Activated CD4-positive, alpha-beta T cell treated with anti-CD3 and anti-CD28 coated beads for 36 hours (primary cell): ENCODE measurements at regions of chr19 and their contacts with region 1.

Region 1: DNA sequence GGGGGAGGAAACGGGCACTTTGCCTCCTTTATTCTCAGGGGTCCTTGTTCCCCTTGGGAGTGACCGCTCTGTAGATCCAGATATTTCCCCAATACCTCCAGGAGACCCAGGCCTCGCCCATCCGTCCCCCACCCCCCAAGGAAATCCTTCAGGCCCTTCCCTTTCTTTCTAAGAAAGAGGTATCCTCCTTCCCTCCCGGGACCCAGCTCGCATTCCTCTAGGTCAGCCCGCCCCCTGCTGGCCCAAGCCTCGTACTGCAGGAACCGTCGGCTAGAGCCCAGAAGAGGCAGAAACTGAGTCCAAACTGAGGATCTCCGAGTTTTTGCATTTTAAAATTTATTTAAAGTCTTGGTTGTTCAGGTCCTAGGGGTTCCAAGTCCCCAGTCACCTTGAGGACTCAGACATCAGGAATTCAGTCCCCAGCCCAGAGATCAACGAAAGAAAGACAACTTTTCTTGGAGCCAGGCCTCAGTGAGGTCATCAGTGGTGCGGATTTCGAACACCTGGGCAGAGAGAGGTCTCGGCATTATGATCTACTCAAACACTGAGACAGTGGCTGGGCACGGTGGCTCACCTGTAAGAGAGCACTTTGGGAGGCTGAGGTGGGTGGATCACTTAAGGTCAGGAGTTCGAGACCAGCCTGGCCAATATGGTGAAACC is 7.5 kb upstream of the LRFN1 start:
- DNase-seq: peak; percentile 90
- ATAC-seq: peak; percentile 39
- H3K4me3 Mint-ChIP-seq: no peak overlapping the region
- H3K27ac Mint-ChIP-seq: peak overlapping the region; percentile 51
- H3K4me1 Mint-ChIP-seq: peaks cover 40% of the 10 kb centered on the region
- H3K27me3 Mint-ChIP-seq: no peaks in the 10 kb centered on the region

Region 2: GRCh38 chr19:39212375-39212742 is 115.8 kb before region 1 on chr19:
- CTCF ChIA-PET with region 1: interaction called, 15 read pairs
- POLR2A ChIA-PET with region 1: no interaction called
- intact Hi-C with region 1: loop called (anchors 1 kb)
- DNase-seq: peak; percentile 86
- ATAC-seq: peak; percentile 100
- H3K4me3 Mint-ChIP-seq: no peak overlapping the region
- H3K27ac Mint-ChIP-seq: no peak overlapping the region
- H3K4me1 Mint-ChIP-seq: no peaks in the 10 kb centered on the region
- H3K27me3 Mint-ChIP-seq: peaks cover 9% of the 10 kb centered on the region

Region 3: GRCh38 chr19:39310558-39311311 is 17.4 kb before region 1 on chr19:
- CTCF ChIA-PET with region 1: interaction called, 10 read pairs
- POLR2A ChIA-PET with region 1: no interaction called
- intact Hi-C with region 1: no loop called
- DNase-seq: no peak
- ATAC-seq: no peak
- H3K4me3 Mint-ChIP-seq: no peak overlapping the region
- H3K27ac Mint-ChIP-seq: no peak overlapping the region
- H3K4me1 Mint-ChIP-seq: peaks cover 3% of the 10 kb centered on the region
- H3K27me3 Mint-ChIP-seq: no peaks in the 10 kb centered on the region

Region 4: DNA sequence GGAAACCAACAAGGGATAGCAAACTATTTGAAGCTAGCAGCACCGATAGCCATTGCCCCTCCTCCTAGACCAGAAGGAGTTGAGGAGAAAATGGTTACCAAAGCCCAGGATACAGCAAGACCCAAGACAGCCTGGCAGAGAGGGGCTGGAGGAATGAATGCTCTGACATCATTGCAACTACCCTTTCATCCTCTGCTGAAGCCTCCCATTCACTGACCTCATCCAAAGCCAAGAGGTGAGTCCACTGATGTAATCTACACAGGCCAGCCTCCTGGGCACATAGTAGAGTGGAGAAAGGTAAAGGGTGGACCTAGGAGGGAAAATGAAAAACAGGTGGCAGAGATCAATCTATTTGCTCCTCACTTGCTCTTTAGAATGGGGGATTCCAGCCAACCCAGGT is 805.3 kb after region 1 on chr19:
- CTCF ChIA-PET with region 1: no interaction called
- POLR2A ChIA-PET with region 1: no interaction called
- intact Hi-C with region 1: no loop called
- DNase-seq: no peak
- ATAC-seq: no peak
- H3K4me3 Mint-ChIP-seq: no peak overlapping the region
- H3K27ac Mint-ChIP-seq: no peak overlapping the region
- H3K4me1 Mint-ChIP-seq: no peaks in the 10 kb centered on the region
- H3K27me3 Mint-ChIP-seq: peaks cover 4% of the 10 kb centered on the region